Activated T-helper 1 cell treated with anti-CD3 and anti-CD28 coated beads, Interleukin-12 subunit alpha, Interleukin-12 subunit beta, Interleukin-2, Interleukin-4 antibody, amounts not matched to agents 30 ng/mL and 10 ng/mL and 1 ng/mL, durations not matched to agents 14 hours and 24 hours and 36 hours (primary cell): ENCODE measurements at regions of chr1 and their contacts with region 1.

Region 1: GRCh38 chr1:93749894-93750301 is 68.3 kb upstream of the BCAR3 start:
- DNase-seq: no peak
- H3K4me3 Mint-ChIP-seq: no peak overlapping the region
- H3K27ac Mint-ChIP-seq: no peak overlapping the region
- H3K4me1 Mint-ChIP-seq: peaks cover 36% of the 10 kb centered on the region
- H3K27me3 Mint-ChIP-seq: peaks cover 11% of the 10 kb centered on the region

Region 2: GRCh38 chr1:93680757-93681550 is 68.9 kb before region 1 on chr1:
- intact Hi-C with region 1: loop called (anchors 5 kb)
- DNase-seq: peak; percentile 19
- H3K4me3 Mint-ChIP-seq: peak overlapping the region; percentile 84
- H3K27ac Mint-ChIP-seq: no peak overlapping the region
- H3K4me1 Mint-ChIP-seq: peaks cover 12% of the 10 kb centered on the region
- H3K27me3 Mint-ChIP-seq: peaks cover 72% of the 10 kb centered on the region